Activated T-helper 1 cell treated with anti-CD3 and anti-CD28 coated beads, Interleukin-12 subunit alpha, Interleukin-12 subunit beta, Interleukin-2, Interleukin-4 antibody, amounts not matched to agents 30 ng/mL and 10 ng/mL and 1 ng/mL, durations not matched to agents 14 hours and 24 hours and 36 hours (primary cell): ENCODE measurements at regions of chr9 and their contacts with region 1.

Region 1: GRCh38 chr9:136545966-136546698 is at the start of gene NOTCH1:
- DNase-seq: peak; percentile 83
- H3K4me3 Mint-ChIP-seq: peak within 1 kb of the TSS; percentile 94
- H3K27ac Mint-ChIP-seq: peak within 1 kb of the TSS; percentile 96
- H3K4me1 Mint-ChIP-seq: peaks cover 5% of the 10 kb centered on the region
- H3K27me3 Mint-ChIP-seq: no peaks in the 10 kb centered on the region
- total RNA-seq, gene NOTCH1: 115 and 121 TPM in 2 replicates

Region 2: DNA sequence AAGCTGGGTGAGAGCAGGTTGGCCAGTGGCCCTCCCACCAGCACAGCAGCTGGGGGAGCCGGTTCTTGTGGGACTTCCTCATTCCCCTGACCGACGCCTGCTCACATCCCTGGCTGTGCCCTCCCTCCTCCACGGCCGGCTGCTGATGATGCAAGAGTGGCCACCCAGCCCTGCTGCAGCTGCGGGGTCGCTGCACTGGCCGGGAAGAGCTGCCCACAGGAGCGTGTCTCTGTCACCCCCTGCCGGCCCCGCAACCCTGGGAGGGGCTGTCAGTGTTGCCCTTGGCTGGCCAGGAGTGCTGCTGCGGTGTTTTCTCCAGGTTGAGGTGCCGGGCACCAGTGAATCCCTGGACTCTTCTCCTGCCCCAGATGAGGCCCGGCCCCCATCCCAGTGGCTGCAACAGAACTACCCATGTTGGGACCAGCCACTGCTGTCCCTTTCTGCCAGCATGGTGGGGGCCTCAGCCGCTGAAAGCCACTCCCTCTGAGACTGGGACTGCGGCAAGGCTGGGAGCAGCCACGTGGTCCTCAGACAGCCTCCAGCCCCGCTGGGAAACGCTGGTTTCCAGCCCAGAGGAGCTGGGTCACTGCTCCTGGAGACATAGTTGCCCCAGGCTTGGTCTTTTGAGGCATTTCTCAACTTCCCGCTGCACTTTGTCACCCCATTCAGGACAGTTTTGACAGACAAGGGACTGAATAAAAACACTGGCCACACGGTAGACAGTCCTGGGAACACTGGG is 173.4 kb before region 1 on chr9:
- intact Hi-C with region 1: no loop called
- DNase-seq: no peak
- H3K4me3 Mint-ChIP-seq: peak overlapping the region; percentile 57
- H3K27ac Mint-ChIP-seq: no peak overlapping the region
- H3K4me1 Mint-ChIP-seq: no peaks in the 10 kb centered on the region
- H3K27me3 Mint-ChIP-seq: no peaks in the 10 kb centered on the region

Region 3: GRCh38 chr9:136512651-136513071 is 33.5 kb before region 1 on chr9:
- intact Hi-C with region 1: loop called (anchors 1 kb)
- DNase-seq: no peak
- H3K4me3 Mint-ChIP-seq: no peak overlapping the region
- H3K27ac Mint-ChIP-seq: no peak overlapping the region
- H3K4me1 Mint-ChIP-seq: no peaks in the 10 kb centered on the region
- H3K27me3 Mint-ChIP-seq: no peaks in the 10 kb centered on the region

Region 4: GRCh38 chr9:136533775-136534157 is 12.4 kb before region 1 on chr9:
- intact Hi-C with region 1: loop called (anchors 1 kb)
- DNase-seq: peak; percentile 72
- H3K4me3 Mint-ChIP-seq: peak overlapping the region; percentile 71
- H3K27ac Mint-ChIP-seq: peak overlapping the region; percentile 86
- H3K4me1 Mint-ChIP-seq: peaks cover 30% of the 10 kb centered on the region
- H3K27me3 Mint-ChIP-seq: no peaks in the 10 kb centered on the region

Region 5: DNA sequence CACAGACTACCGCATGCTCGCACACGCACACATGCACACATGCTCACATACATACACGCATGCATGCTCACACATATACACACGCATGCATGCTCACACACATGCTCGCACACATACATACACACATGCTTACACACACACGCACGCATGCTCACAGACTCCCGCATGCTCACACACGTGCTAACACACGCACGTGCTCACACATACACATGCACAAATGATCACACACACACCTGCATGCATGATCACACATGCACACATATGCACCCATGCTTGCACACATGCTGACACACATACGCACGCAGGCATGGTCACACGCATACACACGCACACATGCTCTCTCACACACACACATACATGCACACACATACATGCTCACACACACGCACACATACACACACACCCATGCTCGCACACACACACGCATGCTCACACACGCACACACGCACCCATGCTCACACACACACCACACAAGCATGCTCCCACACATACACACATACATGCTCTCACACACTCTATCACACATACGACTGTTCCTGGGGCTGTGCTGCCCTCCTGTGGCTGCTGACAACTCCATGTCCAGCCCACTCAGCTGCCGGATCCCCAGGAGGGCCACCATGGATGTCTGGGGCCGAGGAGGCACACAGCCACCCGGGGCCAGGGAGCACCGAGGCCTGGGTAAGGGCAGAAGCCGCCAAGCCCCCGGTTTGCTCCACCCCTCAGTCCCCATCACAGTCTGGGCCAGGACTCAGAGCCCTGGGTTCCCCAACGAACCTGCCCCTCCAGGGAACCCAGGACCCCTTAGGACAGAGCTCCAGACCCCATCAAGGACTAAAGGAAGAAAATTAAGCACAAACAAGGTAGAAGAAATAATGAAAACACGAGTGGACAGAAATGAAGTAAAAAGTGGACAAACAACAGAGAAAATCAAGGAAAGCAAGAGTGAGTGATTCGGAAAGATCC is 85.2 kb after region 1 on chr9:
- intact Hi-C with region 1: no loop called
- DNase-seq: peak; percentile 65
- H3K4me3 Mint-ChIP-seq: no peak overlapping the region
- H3K27ac Mint-ChIP-seq: no peak overlapping the region
- H3K4me1 Mint-ChIP-seq: no peaks in the 10 kb centered on the region
- H3K27me3 Mint-ChIP-seq: peaks cover 8% of the 10 kb centered on the region

Region 6: GRCh38 chr9:136644598-136645351 is 98.6 kb after region 1 on chr9:
- intact Hi-C with region 1: no loop called
- DNase-seq: peak; percentile 54
- H3K4me3 Mint-ChIP-seq: no peak overlapping the region
- H3K27ac Mint-ChIP-seq: no peak overlapping the region
- H3K4me1 Mint-ChIP-seq: no peaks in the 10 kb centered on the region
- H3K27me3 Mint-ChIP-seq: peaks cover 33% of the 10 kb centered on the region